Activated T-helper 1 cell treated with anti-CD3 and anti-CD28 coated beads, Interleukin-12 subunit alpha, Interleukin-12 subunit beta, Interleukin-2, Interleukin-4 antibody, amounts not matched to agents 30 ng/mL and 10 ng/mL and 1 ng/mL, durations not matched to agents 14 hours and 24 hours and 36 hours (primary cell): ENCODE measurements at regions of chr4 and their contacts with region 1.

Region 1: DNA sequence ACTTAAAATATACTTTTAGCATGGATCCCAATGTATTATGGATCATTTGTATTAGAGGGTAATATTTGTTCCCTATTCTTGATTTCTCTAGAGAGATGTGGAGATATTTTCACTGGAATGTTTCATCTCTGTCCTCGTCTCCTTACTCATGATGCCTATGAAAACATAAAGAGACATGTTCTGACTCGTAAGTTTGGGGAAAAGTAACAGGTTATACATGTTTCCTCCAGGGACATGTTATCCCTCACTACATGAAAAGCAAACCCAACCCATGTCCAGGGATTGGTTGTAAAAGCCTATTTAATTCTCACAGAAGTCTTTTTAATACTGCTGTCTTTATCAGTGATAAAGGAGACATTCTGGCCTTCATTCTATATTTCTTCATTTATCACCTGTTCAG is 621.4 kb downstream of the GABRG1 start:
- DNase-seq: no peak
- H3K4me3 Mint-ChIP-seq: no peak overlapping the region
- H3K27ac Mint-ChIP-seq: no peak overlapping the region
- H3K4me1 Mint-ChIP-seq: no peaks in the 10 kb centered on the region
- H3K27me3 Mint-ChIP-seq: no peaks in the 10 kb centered on the region

Region 2: DNA sequence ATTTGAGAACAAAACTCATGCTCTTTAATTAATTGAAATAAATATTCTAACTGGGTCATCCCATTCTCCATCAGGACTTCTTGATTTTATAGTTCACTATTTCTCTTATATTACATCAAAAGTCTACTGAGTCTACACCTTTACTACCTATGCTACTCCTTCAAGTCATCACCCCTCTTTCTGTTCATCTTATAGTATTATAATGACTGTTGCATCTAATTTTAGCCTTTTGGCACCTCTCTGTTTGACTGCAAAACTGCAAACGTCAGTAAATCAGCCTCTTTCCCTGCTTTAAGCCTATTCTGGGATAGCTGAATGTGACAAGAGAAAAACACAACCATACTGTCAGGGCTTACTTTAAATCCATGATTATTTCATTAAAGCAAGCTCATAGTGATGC is 17.7 kb before region 1 on chr4:
- intact Hi-C with region 1: loop called (anchors 1 kb)
- DNase-seq: no peak
- H3K4me3 Mint-ChIP-seq: no peak overlapping the region
- H3K27ac Mint-ChIP-seq: no peak overlapping the region
- H3K4me1 Mint-ChIP-seq: no peaks in the 10 kb centered on the region
- H3K27me3 Mint-ChIP-seq: no peaks in the 10 kb centered on the region